Activated B cell treated with CpG ODN at 0.5 μM for 24 hours (primary cell): ENCODE measurements at regions of chr9 and their contacts with region 1.

Region 1: GRCh38 chr9:124218438-124218982 is 39.2 kb upstream of the NEK6 start:
- DNase-seq: peak; percentile 78
- ATAC-seq: peak; percentile 64
- H3K4me3 Mint-ChIP-seq: peak overlapping the region; percentile 69
- H3K27ac Mint-ChIP-seq: peak overlapping the region; percentile 96
- H3K4me1 Mint-ChIP-seq: peaks cover 87% of the 10 kb centered on the region
- H3K27me3 Mint-ChIP-seq: no peaks in the 10 kb centered on the region
- CTCF ChIP-seq: no peak

Region 2: DNA sequence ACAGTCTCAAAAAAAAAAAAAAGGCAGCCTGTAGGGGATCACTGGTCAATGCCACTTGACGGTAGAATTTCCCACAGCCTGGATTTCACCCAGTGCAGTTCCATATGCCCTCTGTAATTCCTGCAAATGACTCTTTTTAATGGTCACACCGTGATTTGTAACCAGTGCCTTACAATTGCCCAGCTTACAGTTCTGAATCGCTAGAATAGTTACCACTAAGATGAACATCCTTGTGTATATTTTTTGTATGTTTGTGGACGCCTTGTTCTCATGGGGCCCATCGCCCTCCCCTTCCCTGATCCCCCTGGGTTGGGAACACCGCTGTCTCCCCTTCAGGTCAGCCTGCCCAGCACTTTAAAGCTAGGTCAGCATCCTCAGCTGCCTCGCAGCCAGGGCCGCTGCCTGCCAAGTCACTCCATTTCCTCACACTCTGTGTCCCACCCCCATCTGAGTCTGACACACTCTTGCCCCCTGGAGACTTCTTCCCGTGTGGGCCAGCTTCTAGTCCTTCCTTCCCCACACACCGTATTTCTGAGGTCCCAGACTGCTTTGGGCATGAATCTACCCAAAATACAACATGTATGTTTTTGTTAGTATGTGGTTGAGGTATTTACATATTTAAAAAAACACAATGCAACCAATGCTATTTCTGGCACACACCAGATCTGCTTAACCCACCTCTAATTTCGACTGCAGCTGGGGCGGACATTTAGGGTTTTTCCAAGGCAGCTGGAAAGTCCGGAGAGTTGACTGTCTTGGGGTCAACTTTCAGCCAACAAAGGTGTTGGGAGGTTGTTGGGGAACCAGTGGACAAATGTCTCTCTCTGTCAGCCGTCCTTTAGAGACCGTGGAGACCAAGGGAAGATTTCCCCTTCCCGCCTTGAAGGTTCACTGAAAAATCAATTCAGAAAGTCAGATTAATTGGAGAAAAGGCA is 81.2 kb before region 1 on chr9:
- CTCF ChIA-PET with region 1: no interaction called
- POLR2A ChIA-PET with region 1: interaction called, 11 read pairs
- intact Hi-C with region 1: no loop called
- DNase-seq: no peak
- ATAC-seq: peak; percentile 83
- H3K4me3 Mint-ChIP-seq: peak overlapping the region; percentile 67
- H3K27ac Mint-ChIP-seq: peak overlapping the region; percentile 80
- H3K4me1 Mint-ChIP-seq: peaks cover 28% of the 10 kb centered on the region
- H3K27me3 Mint-ChIP-seq: no peaks in the 10 kb centered on the region
- CTCF ChIP-seq: no peak

Region 3: GRCh38 chr9:124202447-124202971 is 16.0 kb before region 1 on chr9:
- CTCF ChIA-PET with region 1: interaction called, 29 read pairs
- POLR2A ChIA-PET with region 1: interaction called, 256 read pairs
- intact Hi-C with region 1: loop called (anchors 1 kb)
- DNase-seq: peak; percentile 75
- ATAC-seq: peak; percentile 88
- H3K4me3 Mint-ChIP-seq: peak overlapping the region; percentile 80
- H3K27ac Mint-ChIP-seq: peak overlapping the region; percentile 99
- H3K4me1 Mint-ChIP-seq: peaks cover 96% of the 10 kb centered on the region
- H3K27me3 Mint-ChIP-seq: no peaks in the 10 kb centered on the region
- CTCF ChIP-seq: no peak

Region 4: GRCh38 chr9:124257844-124258606 is 39.5 kb after region 1 on chr9 and contains the start of gene NEK6:
- CTCF ChIA-PET with region 1: interaction called, 3 read pairs
- POLR2A ChIA-PET with region 1: interaction called, 81 read pairs
- intact Hi-C with region 1: loop called (anchors 1 kb)
- DNase-seq: peak; percentile 56
- ATAC-seq: peak; percentile 41
- H3K4me3 Mint-ChIP-seq: peak within 1 kb of the TSS; percentile 96
- H3K27ac Mint-ChIP-seq: peak within 1 kb of the TSS; percentile 94
- H3K4me1 Mint-ChIP-seq: peaks cover 87% of the 10 kb centered on the region
- H3K27me3 Mint-ChIP-seq: no peaks in the 10 kb centered on the region
- CTCF ChIP-seq: no peak
- total RNA-seq, gene NEK6: 110 and 115 TPM in 2 replicates

Region 5: GRCh38 chr9:124285903-124286291 is 67.4 kb after region 1 on chr9:
- CTCF ChIA-PET with region 1: no interaction called
- POLR2A ChIA-PET with region 1: interaction called, 25 read pairs
- intact Hi-C with region 1: loop called (anchors 1 kb)
- DNase-seq: no peak
- ATAC-seq: peak; percentile 25
- H3K4me3 Mint-ChIP-seq: peak overlapping the region; percentile 84
- H3K27ac Mint-ChIP-seq: peak overlapping the region; percentile 99
- H3K4me1 Mint-ChIP-seq: peaks cover 95% of the 10 kb centered on the region
- H3K27me3 Mint-ChIP-seq: no peaks in the 10 kb centered on the region
- CTCF ChIP-seq: no peak

Region 6: DNA sequence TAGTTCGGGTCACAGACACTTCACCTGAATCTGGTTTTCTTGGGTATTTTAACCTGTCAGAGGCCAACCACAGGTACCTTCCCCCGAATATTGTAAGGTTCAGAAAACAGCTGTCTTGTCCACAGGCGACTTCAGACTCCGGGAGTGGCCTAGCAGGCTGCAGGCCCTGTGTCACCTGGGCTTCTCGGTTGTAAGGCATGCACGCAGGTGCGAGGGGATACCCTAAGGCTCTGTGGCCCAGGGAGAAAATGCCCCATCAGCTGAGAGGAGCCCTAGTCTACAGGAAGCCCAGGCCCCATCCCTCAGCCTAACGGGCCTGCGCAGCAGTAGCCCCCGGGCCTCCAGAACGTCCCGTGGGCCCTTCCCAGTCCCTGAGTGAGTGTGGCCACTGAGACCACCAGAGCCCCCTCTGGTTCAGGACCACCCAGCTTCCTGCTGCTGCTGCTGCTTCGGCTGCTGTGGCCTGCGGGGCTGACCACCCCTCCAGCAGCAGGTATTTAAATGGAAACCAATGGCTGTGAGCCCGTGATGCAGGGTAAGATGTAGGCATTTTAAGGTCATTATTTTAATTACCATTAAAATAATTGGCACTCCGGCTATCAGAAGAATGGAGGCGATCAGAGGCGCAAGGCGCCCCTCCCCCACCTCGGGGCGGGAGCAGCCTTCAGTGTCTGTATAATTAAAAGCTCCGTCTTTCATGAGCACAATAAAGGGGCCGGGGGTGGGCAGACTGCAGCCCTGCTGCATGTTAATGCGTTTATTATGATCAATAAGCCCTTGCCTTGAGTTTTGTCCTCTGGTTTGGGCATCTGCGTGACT is 131.4 kb after region 1 on chr9:
- CTCF ChIA-PET with region 1: no interaction called
- POLR2A ChIA-PET with region 1: interaction called, 13 read pairs
- intact Hi-C with region 1: no loop called
- DNase-seq: peak; percentile 6
- ATAC-seq: no peak
- H3K4me3 Mint-ChIP-seq: no peak overlapping the region
- H3K27ac Mint-ChIP-seq: no peak overlapping the region
- H3K4me1 Mint-ChIP-seq: no peaks in the 10 kb centered on the region
- H3K27me3 Mint-ChIP-seq: no peaks in the 10 kb centered on the region
- CTCF ChIP-seq: no peak